Spleen (tissue), 13 donors: ENCODE measurements at regions of chr22 and their contacts with region 1.

Region 1: DNA sequence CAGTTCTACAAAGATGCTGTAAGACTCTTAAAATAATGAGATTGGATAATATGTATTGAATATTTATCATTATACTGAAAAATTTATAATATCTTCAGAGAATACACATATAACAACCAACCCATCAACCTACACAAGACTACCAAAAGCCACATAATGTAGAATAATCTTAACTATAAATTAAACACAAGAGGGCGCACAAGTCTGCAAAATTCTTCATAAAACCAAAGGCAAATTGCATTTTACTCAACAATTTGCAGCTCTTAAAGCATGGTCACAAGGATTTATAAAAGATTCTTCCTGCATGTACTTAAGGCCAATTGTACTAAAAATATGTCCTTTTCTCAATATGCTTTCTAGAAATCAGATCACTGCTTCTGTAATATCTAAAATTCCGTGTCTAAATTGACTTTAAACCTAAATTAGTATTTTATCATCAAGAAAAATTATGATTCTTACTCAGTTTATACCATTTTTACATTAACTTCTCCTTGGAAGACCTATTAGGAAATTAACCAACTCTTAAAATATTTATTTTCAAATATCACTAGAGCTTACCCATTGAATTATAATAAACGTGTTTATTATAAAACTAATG is 79.0 kb downstream of the TTC28 start:
- DNase-seq: no peak
- H3K4me3 ChIP-seq: no peak overlapping the region
- H3K27ac ChIP-seq: no peak overlapping the region
- H3K4me1 ChIP-seq: no peaks in the 10 kb centered on the region
- H3K27me3 ChIP-seq: no peaks in the 10 kb centered on the region
- CTCF ChIP-seq: peak in 10 of 11 experiments; percentile 18 to 67 (median 54)
- POLR2A ChIP-seq: no peak

Region 2: GRCh38 chr22:28829358-28830181 is 228.9 kb after region 1 on chr22:
- intact Hi-C with region 1: loop called (anchors 5 kb)
- DNase-seq: peak; percentile 91
- H3K4me3 ChIP-seq: no peak overlapping the region
- H3K27ac ChIP-seq: peak overlapping the region in 2 of 8 donors; percentile 2 to 5
- H3K4me1 ChIP-seq: peaks cover 3 to 34% (median 11%) of the 10 kb centered on the region in 6 donors
- H3K27me3 ChIP-seq: no peaks in the 10 kb centered on the region
- CTCF ChIP-seq: peak; percentile 89 to 98 (median 96)
- POLR2A ChIP-seq: no peak

Region 3: GRCh38 chr22:29040385-29041275 is 440.0 kb after region 1 on chr22:
- intact Hi-C with region 1: loop called (anchors 5 kb)
- DNase-seq: no peak
- H3K4me3 ChIP-seq: no peak overlapping the region
- H3K27ac ChIP-seq: no peak overlapping the region
- H3K4me1 ChIP-seq: peaks cover 0 to 14% (median 8%) of the 10 kb centered on the region in 6 donors
- H3K27me3 ChIP-seq: peaks cover 0 to 4% (median 0%) of the 10 kb centered on the region in 7 donors
- CTCF ChIP-seq: peak; percentile 89 to 97 (median 93)
- POLR2A ChIP-seq: no peak